ENCODE measurements at regions of chr21 and their contacts with region 1.

Region 1: GRCh38 chr21:15592271-15592860 is 137.4 kb upstream of the USP25 start:
- DNase-seq: peak; percentile 50
- H3K4me3 ChIP-seq: no peak overlapping the region
- H3K27ac ChIP-seq: no peak overlapping the region
- H3K4me1 ChIP-seq: no peaks in the 10 kb centered on the region
- H3K27me3 ChIP-seq: no peaks in the 10 kb centered on the region
- CTCF ChIP-seq: peak; percentile 70

Region 2: DNA sequence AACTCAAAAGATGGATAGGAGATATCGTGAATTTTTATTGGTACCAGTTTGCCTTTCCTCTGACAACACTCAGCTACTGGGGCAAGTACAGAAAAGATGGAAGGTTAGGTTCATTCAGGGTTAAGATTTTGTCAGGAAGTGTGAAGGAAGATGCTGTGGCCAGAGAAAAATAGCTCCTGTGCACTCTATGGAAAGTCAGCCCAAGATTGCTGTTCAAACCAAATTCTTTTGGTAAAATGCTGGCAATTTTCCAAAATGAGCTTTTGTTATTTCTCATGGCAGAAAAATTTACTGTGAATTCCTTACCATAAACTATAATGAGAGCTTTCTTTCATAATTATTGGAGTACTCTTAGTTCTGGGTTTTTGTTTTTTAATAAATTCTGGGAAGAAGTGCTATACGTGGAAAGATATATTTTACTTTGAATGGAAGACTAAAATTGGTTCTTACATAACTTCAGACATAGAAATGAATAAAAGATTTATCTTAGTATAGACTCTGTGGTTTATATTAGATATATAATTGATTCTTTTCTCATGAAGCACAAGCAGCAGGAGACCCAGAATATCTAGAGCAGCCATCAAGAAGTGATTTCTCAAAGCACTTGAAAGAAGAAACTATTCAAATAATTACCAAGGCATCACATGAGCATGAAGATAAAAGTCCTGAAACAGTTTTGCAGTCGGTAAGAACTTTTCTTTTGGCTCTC is 249.6 kb after region 1 on chr21:
- CTCF ChIA-PET with region 1: interaction called, 10 read pairs
- POLR2A ChIA-PET with region 1: no interaction called
- intact Hi-C with region 1: no loop called
- DNase-seq: peak; percentile 37
- H3K4me3 ChIP-seq: no peak overlapping the region
- H3K27ac ChIP-seq: peak overlapping the region; percentile 9
- H3K4me1 ChIP-seq: peaks cover 30% of the 10 kb centered on the region
- H3K27me3 ChIP-seq: no peaks in the 10 kb centered on the region
- CTCF ChIP-seq: no peak